ENCODE measurements at regions of chr19 and their contacts with region 1.

Region 1: DNA sequence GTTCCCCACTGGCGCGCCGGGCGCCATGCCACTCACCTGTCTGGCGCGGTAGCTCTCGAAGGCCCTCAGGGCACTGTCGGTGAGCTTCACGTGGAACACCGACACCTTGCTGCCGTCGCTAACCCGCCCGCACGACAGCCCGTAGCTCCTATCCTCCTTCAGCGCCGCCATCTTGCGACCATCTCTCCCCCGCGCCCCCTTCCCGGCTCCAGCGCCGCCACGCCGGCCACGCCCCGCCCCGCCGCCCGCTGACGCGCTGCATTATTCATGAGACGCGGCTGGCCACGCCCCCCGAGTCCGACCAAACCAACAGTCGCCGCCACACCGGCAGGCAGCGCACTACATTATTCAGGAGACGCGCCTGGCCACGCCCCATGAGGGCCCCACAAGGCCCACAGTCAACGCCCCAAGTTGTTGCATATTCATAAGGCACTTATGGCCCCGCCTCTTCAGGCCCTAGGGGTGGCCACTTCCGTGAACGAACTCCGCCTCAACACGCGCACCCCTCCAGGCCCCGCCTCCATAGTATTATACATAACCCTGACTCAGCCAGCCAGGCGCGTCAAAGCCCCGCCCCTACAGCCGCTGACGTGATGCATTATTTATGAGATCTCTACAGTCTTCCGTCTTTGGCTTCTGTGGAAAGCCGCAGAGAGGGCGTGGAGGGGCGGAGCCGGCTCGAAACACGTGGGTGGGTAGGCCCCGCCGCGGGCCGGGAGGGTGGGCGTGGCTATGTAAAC is at the start of gene ELL:
- DNase-seq: peak; percentile 100
- ATAC-seq: peak; percentile 89
- H3K4me3 Mint-ChIP-seq: peak within 1 kb of the TSS; percentile 98
- H3K27ac Mint-ChIP-seq: peak within 1 kb of the TSS; percentile 96
- H3K4me1 Mint-ChIP-seq: peaks cover 24% of the 10 kb centered on the region
- H3K27me3 Mint-ChIP-seq: no peaks in the 10 kb centered on the region
- CTCF ChIP-seq: no peak
- total RNA-seq, gene ELL: 29.0 and 32.6 TPM in 2 replicates

Region 2: DNA sequence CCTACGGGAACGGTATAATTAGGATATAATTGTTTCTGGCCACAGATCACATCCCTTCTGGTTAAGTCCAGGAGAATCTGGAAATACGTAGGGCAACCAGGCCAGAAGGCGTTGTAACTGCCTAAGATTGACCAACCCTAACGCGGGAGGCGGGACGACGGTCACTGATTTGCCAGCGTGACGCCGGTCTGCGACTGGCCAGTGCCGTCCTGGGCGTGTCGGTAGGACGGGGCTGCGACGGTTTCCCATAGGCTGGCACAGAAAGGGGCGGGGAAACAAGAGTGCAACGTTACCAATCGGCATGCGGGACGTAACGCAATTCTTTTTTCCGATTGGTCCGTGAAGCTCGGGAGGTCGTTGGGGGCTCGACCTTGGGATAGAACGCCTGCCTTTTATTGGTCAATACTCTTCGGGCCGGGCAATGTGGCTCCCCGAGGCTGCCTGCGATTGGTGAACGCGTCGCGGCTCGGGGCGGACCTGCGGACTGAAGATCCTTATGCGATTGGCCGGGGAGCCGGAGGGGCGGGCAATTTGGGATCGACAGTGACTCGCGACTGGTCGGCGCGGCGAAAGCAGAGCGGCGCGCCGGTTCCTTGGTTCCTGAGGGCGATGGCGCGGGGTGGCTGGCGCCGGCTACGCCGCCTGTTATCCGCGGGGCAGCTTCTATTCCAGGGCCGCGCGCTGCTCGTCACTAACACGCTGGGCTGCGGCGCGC is 329.2 kb before region 1 on chr19 and contains the start of gene MPV17L2:
- CTCF ChIA-PET with region 1: no interaction called
- POLR2A ChIA-PET with region 1: no interaction called
- intact Hi-C with region 1: loop called (anchors 5 kb)
- DNase-seq: peak; percentile 90
- ATAC-seq: peak; percentile 83
- H3K4me3 Mint-ChIP-seq: peak within 1 kb of the TSS; percentile 87
- H3K27ac Mint-ChIP-seq: peak within 1 kb of the TSS; percentile 95
- H3K4me1 Mint-ChIP-seq: peaks cover 40% of the 10 kb centered on the region
- H3K27me3 Mint-ChIP-seq: no peaks in the 10 kb centered on the region
- CTCF ChIP-seq: no peak
- total RNA-seq, gene MPV17L2: 17.3 and 17.9 TPM in 2 replicates

Region 3: GRCh38 chr19:18542936-18543815 is 21.1 kb after region 1 on chr19 and contains the start of gene FKBP8:
- CTCF ChIA-PET with region 1: interaction called, 4 read pairs
- POLR2A ChIA-PET with region 1: interaction called, 8 read pairs
- intact Hi-C with region 1: loop called (anchors 1 kb)
- DNase-seq: peak; percentile 92
- ATAC-seq: peak; percentile 99
- H3K4me3 Mint-ChIP-seq: peak within 1 kb of the TSS; percentile 90
- H3K27ac Mint-ChIP-seq: peak within 1 kb of the TSS; percentile 90
- H3K4me1 Mint-ChIP-seq: peaks cover 23% of the 10 kb centered on the region
- H3K27me3 Mint-ChIP-seq: no peaks in the 10 kb centered on the region
- CTCF ChIP-seq: no peak
- total RNA-seq, gene FKBP8: 133 and 140 TPM in 2 replicates

Region 4: GRCh38 chr19:18594096-18594823 is 72.2 kb after region 1 on chr19:
- CTCF ChIA-PET with region 1: interaction called, 13 read pairs
- POLR2A ChIA-PET with region 1: interaction called, 33 read pairs
- intact Hi-C with region 1: loop called (anchors 1 kb)
- DNase-seq: peak; percentile 75
- ATAC-seq: peak; percentile 83
- H3K4me3 Mint-ChIP-seq: peak overlapping the region; percentile 76
- H3K27ac Mint-ChIP-seq: no peak overlapping the region
- H3K4me1 Mint-ChIP-seq: peaks cover 29% of the 10 kb centered on the region
- H3K27me3 Mint-ChIP-seq: peaks cover 5% of the 10 kb centered on the region
- CTCF ChIP-seq: no peak

Region 5: DNA sequence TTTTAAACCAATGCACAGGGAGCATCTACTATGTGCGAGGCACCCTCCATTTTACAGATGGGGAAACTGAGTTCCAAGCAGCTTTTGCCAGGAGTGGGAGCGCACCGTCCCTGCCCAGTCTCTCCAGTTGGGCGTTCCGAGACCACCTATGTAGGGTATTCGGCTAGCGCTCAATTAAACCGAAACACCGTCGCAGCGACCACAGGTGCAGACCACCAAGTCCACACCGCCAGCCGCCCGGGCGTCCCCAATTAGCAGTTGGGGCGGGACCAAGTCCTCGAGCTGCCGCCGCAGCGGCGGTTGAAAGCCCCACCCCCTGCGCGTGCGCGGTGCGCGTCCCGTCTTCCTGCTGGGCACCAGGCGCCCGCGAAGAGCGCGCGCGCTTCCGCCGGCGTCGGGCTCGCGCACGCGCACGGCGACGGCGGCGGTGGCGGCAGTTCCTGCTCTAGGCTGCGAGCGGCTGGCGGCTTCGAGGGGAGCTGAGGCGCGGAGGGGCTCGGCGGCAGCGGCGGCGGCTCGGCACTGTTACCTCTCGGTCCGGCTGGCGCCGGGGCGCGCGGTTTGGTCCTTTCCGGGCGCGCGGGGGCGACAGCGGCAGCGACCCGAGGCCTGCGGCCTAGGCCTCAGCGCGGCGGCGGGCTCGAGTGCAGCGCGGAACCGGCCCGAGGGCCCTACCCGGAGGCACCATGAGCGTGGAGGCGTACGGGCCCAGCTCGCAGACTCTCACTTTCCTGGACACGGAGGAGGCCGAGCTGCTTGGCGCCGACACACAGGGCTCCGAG is 309.7 kb after region 1 on chr19 and contains the start of gene UPF1:
- CTCF ChIA-PET with region 1: no interaction called
- POLR2A ChIA-PET with region 1: interaction called, 4 read pairs
- intact Hi-C with region 1: loop called (anchors 1 kb)
- DNase-seq: peak; percentile 97
- ATAC-seq: peak; percentile 84
- H3K4me3 Mint-ChIP-seq: peak within 1 kb of the TSS; percentile 90
- H3K27ac Mint-ChIP-seq: peak within 1 kb of the TSS; percentile 77
- H3K4me1 Mint-ChIP-seq: peaks cover 35% of the 10 kb centered on the region
- H3K27me3 Mint-ChIP-seq: no peaks in the 10 kb centered on the region
- CTCF ChIP-seq: no peak
- total RNA-seq, gene UPF1: 93.2 and 107 TPM in 2 replicates

Region 6: GRCh38 chr19:19192078-19192882 is 670.2 kb after region 1 on chr19 and contains the starts of genes BORCS8 and RFXANK:
- CTCF ChIA-PET with region 1: no interaction called
- POLR2A ChIA-PET with region 1: no interaction called
- intact Hi-C with region 1: loop called (anchors 5 kb)
- DNase-seq: peak; percentile 91
- ATAC-seq: peak; percentile 85
- H3K4me3 Mint-ChIP-seq: peak within 1 kb of the TSS; percentile 99
- H3K27ac Mint-ChIP-seq: peak within 1 kb of the TSS; percentile 99
- H3K4me1 Mint-ChIP-seq: peaks cover 49% of the 10 kb centered on the region
- H3K27me3 Mint-ChIP-seq: no peaks in the 10 kb centered on the region
- CTCF ChIP-seq: no peak
- total RNA-seq, gene BORCS8: 51.8 and 52.3 TPM in 2 replicates
- total RNA-seq, gene RFXANK: 95.4 and 96.9 TPM in 2 replicates